ENCODE measurements at regions of chr3 and their contacts with region 1.

Region 1: GRCh38 chr3:31210155-31210554 is 315.7 kb upstream of the GADL1 start:
- DNase-seq: peak; percentile 21 to 52
- H3K4me3 ChIP-seq: no peak overlapping the region
- H3K27ac ChIP-seq: no peak overlapping the region
- H3K4me1 ChIP-seq: no peaks in the 10 kb centered on the region
- H3K27me3 ChIP-seq: no peaks in the 10 kb centered on the region
- CTCF ChIP-seq: peak; percentile 74 to 91 (median 77)
- EP300 ChIP-seq: no peak
- POLR2A ChIP-seq: no peak
- RAD21 ChIP-seq: peak; percentile 89 to 94

Region 2: GRCh38 chr3:30945291-30945690 is 264.9 kb before region 1 on chr3:
- CTCF ChIA-PET with region 1: no interaction called
- POLR2A ChIA-PET with region 1: no interaction called
- DNase-seq: no peak
- H3K4me3 ChIP-seq: no peak overlapping the region
- H3K27ac ChIP-seq: no peak overlapping the region
- H3K4me1 ChIP-seq: no peaks in the 10 kb centered on the region; a peak in 1 of 7 replicates
- H3K27me3 ChIP-seq: no peaks in the 10 kb centered on the region
- CTCF ChIP-seq: no peak
- EP300 ChIP-seq: no peak
- POLR2A ChIP-seq: no peak
- RAD21 ChIP-seq: no peak

Region 3: DNA sequence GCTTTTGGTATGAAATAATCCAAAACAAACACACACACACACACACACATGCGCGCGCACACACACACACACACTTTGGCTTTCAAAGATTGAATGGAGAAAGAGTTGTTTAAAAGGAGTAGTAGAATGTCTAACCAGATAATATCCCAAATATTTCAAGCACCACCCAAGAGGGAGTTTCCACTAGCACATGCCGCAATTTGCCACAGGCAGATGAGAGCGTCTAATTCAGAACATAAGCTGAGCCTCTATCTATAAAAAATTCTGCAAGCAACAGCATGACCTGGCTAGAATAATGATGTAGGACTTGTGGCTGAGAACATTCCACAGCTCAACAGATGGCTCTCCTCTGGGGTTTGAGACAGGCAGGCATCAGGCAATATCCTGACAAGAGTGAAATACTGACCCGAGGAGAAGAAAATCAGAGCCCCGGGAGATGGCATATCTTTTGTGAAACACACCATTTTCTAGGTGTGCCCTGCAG is 13.2 kb before region 1 on chr3:
- CTCF ChIA-PET with region 1: interaction called, 18 read pairs
- POLR2A ChIA-PET with region 1: no interaction called
- DNase-seq: no peak
- H3K4me3 ChIP-seq: no peak overlapping the region
- H3K27ac ChIP-seq: no peak overlapping the region
- H3K4me1 ChIP-seq: peaks cover 0 to 6% (median 2%) of the 10 kb centered on the region in 4 experiments; a peak in 3 of 7 replicates
- H3K27me3 ChIP-seq: no peaks in the 10 kb centered on the region; a peak in 2 of 7 replicates
- CTCF ChIP-seq: no peak
- EP300 ChIP-seq: no peak
- POLR2A ChIP-seq: no peak
- RAD21 ChIP-seq: no peak

Region 4: GRCh38 chr3:31227131-31227562 is 17.0 kb after region 1 on chr3:
- CTCF ChIA-PET with region 1: interaction called, 35 read pairs
- POLR2A ChIA-PET with region 1: no interaction called
- DNase-seq: no peak
- H3K4me3 ChIP-seq: no peak overlapping the region
- H3K27ac ChIP-seq: no peak overlapping the region
- H3K4me1 ChIP-seq: peaks cover 0 to 2% (median 2%) of the 10 kb centered on the region in 4 experiments; a peak in 2 of 7 replicates
- H3K27me3 ChIP-seq: no peaks in the 10 kb centered on the region
- CTCF ChIP-seq: no peak
- EP300 ChIP-seq: no peak
- POLR2A ChIP-seq: no peak
- RAD21 ChIP-seq: no peak

Measured in H1 (cell line).